ENCODE measurements at regions of chr1 and their contacts with region 1.

Region 1: DNA sequence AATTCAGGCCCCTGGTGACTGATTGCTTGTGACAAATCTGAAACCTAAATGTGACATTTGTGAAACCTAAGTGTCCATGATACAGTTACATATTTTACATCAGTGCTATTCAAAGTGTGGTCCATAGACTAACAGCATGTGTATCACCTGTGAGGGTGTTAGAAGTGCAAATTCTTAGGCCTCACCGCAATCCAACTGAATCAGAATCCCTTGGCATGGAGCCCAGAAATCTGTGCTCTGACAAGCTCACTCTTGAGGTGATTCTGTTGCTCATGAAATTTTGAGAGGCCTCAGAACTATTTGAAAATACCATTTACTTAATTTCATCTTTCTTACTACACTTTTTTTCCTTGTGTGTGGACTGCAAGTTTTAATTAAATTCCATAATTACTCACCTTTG is 587.9 kb downstream of the ADGRL2 start:
- DNase-seq: no peak
- ATAC-seq: no peak
- H3K4me3 ChIP-seq: no peak overlapping the region
- H3K27ac ChIP-seq: no peak overlapping the region
- H3K4me1 ChIP-seq: no peaks in the 10 kb centered on the region
- H3K27me3 ChIP-seq: no peaks in the 10 kb centered on the region
- CTCF ChIP-seq: no peak

Region 2: GRCh38 chr1:82405333-82405732 is 16.7 kb after region 1 on chr1:
- CTCF ChIA-PET with region 1: no interaction called
- POLR2A ChIA-PET with region 1: no interaction called
- in situ Hi-C with region 1: no loop called
- intact Hi-C with region 1: loop called (anchors 1 kb)
- DNase-seq: no peak
- ATAC-seq: no peak
- H3K4me3 ChIP-seq: no peak overlapping the region
- H3K27ac ChIP-seq: no peak overlapping the region
- H3K4me1 ChIP-seq: no peaks in the 10 kb centered on the region
- H3K27me3 ChIP-seq: no peaks in the 10 kb centered on the region
- CTCF ChIP-seq: no peak

Region 3: GRCh38 chr1:82423174-82423815 is 34.6 kb after region 1 on chr1:
- CTCF ChIA-PET with region 1: no interaction called
- POLR2A ChIA-PET with region 1: no interaction called
- in situ Hi-C with region 1: no loop called
- intact Hi-C with region 1: loop called (anchors 5 kb)
- DNase-seq: no peak
- ATAC-seq: no peak
- H3K4me3 ChIP-seq: no peak overlapping the region
- H3K27ac ChIP-seq: no peak overlapping the region
- H3K4me1 ChIP-seq: no peaks in the 10 kb centered on the region
- H3K27me3 ChIP-seq: no peaks in the 10 kb centered on the region
- CTCF ChIP-seq: no peak

Region 4: GRCh38 chr1:82614090-82614489 is 225.4 kb after region 1 on chr1:
- CTCF ChIA-PET with region 1: no interaction called
- POLR2A ChIA-PET with region 1: no interaction called
- in situ Hi-C with region 1: no loop called
- intact Hi-C with region 1: loop called (anchors 10 kb)
- DNase-seq: no peak
- ATAC-seq: no peak
- H3K4me3 ChIP-seq: no peak overlapping the region
- H3K27ac ChIP-seq: no peak overlapping the region
- H3K4me1 ChIP-seq: no peaks in the 10 kb centered on the region
- H3K27me3 ChIP-seq: no peaks in the 10 kb centered on the region
- CTCF ChIP-seq: no peak

Measured in Panc1 (cell line).